Activated naive CD4-positive, alpha-beta T cell treated with anti-CD3 and anti-CD28 coated beads for 36 hours (primary cell): ENCODE measurements at regions of chr5 and their contacts with region 1.

Region 1: GRCh38 chr5:141691867-141692532 is 10.0 kb upstream of the ARAP3 start:
- DNase-seq: peak; percentile 90
- H3K4me3 Mint-ChIP-seq: peak overlapping the region; percentile 53
- H3K27ac Mint-ChIP-seq: no peak overlapping the region
- H3K4me1 Mint-ChIP-seq: peaks cover 20% of the 10 kb centered on the region
- H3K27me3 Mint-ChIP-seq: peaks cover 7% of the 10 kb centered on the region

Region 2: DNA sequence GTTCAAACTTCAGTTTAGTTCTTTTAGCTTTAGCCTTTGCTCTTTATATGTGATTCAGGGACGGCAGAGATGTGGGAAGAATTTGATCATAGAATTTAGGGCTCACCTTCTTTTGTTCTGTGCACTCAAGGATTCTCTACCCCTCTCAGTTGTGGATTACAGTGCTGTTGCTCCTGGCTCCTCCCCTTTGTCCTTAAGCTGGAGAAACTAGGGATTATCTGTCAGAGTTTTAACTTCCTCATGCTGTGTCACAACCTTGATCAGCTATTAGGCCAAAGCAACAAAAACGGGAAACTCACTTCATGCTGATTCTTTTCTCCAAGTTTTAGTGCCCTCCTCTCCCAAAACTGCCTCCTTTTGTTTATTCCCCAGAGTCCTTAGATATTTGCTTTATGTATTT is 738.8 kb before region 1 on chr5:
- CTCF ChIA-PET with region 1: no interaction called
- intact Hi-C with region 1: no loop called
- DNase-seq: no peak
- H3K4me3 Mint-ChIP-seq: no peak overlapping the region
- H3K27ac Mint-ChIP-seq: no peak overlapping the region
- H3K4me1 Mint-ChIP-seq: no peaks in the 10 kb centered on the region
- H3K27me3 Mint-ChIP-seq: peaks cover 3% of the 10 kb centered on the region

Region 3: DNA sequence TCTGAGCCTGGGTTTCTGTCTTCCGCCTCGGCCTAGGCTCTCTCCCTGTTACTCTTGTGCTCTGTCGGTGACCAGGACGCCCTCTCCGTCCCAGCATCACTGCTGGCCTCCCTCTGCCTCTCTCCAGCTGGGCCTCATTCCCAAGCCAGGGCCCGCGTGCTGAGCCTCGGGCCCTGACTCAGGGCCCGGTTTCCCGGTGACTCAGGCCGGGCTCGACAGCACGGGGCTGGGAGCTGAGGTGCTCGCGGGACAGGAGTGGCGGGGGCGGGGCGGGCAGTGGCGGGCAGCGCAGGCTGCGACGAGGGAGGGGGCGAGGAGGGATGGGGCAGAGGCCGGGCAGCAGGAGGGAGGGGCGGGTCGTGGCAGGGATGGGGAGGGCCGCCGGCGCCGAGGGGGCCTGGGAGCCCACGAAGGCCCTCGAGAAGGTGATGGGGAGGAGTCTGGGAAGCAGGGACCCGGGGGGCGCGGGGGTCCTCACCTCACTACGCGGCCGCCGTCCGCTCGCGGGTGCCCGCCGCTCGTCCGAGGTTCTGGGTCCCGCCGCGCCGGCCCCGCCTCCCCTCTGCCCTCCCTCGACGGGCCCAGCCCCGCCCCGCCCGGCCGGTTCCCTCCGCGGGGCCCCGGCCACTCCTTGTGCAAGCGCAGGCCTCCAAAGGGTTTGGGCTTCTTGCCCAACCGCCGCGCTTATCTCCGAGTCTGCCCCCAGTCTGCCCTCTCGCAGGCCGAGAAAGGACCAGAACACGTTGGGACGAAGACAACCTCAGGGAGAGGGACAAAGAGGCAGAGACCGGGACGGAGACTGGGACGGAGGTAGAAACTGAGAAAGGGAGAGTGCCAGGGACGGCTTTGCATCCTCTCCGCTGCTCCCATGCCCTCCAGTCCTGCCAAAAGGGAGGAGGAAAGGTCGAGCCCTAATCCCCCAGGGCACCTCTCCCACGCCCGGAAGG is 10.0 kb before region 1 on chr5 and contains the start of gene ARAP3:
- CTCF ChIA-PET with region 1: interaction called, 55 read pairs
- intact Hi-C with region 1: no loop called
- DNase-seq: peak; percentile 41
- H3K4me3 Mint-ChIP-seq: peak within 1 kb of the TSS; percentile 63
- H3K27ac Mint-ChIP-seq: peak within 1 kb of the TSS; percentile 25
- H3K4me1 Mint-ChIP-seq: peaks cover 18% of the 10 kb centered on the region
- H3K27me3 Mint-ChIP-seq: no peaks in the 10 kb centered on the region
- total RNA-seq, gene ARAP3: 1.2 to 2.2 TPM

Region 4: DNA sequence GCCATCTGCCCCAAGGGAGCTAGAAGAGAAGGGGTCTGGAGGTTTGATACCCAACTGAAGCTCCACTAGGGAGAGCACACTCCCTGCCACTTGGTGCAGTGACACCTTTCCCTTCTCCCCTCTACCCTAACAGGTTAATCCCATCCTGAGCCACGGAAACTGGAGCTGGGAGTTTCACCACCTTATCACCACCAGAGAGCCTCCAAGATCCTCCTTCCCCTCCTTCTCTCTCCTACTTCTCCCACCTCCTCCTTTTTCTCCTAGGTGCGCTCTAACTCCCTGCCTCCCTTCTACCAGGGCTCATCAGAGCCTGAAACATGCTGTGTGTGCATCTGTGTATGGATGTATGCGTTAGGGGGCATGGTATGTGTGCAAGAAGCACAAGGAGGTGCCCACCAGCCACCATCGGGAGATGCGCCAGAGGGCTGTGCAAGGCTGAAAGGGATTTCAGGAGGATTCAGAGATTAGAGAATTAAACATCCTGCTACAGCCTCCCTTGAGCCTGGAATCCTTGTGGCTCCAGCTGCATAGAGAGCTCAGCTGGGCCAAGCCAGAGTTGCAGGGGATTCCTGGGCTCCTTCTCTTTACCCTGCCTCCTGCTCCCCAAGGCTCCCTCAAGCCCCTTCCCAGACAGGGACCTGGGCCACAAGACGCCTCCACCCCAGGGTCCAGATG is 96.4 kb after region 1 on chr5:
- CTCF ChIA-PET with region 1: no interaction called
- intact Hi-C with region 1: no loop called
- DNase-seq: no peak
- H3K4me3 Mint-ChIP-seq: no peak overlapping the region
- H3K27ac Mint-ChIP-seq: no peak overlapping the region
- H3K4me1 Mint-ChIP-seq: no peaks in the 10 kb centered on the region
- H3K27me3 Mint-ChIP-seq: peaks cover 5% of the 10 kb centered on the region

Region 5: GRCh38 chr5:141825791-141826560 is 134.0 kb after region 1 on chr5:
- CTCF ChIA-PET with region 1: interaction called, 7 read pairs
- intact Hi-C with region 1: loop called (anchors 2 kb)
- DNase-seq: peak; percentile 23
- H3K4me3 Mint-ChIP-seq: no peak overlapping the region
- H3K27ac Mint-ChIP-seq: no peak overlapping the region
- H3K4me1 Mint-ChIP-seq: no peaks in the 10 kb centered on the region
- H3K27me3 Mint-ChIP-seq: no peaks in the 10 kb centered on the region

Region 6: DNA sequence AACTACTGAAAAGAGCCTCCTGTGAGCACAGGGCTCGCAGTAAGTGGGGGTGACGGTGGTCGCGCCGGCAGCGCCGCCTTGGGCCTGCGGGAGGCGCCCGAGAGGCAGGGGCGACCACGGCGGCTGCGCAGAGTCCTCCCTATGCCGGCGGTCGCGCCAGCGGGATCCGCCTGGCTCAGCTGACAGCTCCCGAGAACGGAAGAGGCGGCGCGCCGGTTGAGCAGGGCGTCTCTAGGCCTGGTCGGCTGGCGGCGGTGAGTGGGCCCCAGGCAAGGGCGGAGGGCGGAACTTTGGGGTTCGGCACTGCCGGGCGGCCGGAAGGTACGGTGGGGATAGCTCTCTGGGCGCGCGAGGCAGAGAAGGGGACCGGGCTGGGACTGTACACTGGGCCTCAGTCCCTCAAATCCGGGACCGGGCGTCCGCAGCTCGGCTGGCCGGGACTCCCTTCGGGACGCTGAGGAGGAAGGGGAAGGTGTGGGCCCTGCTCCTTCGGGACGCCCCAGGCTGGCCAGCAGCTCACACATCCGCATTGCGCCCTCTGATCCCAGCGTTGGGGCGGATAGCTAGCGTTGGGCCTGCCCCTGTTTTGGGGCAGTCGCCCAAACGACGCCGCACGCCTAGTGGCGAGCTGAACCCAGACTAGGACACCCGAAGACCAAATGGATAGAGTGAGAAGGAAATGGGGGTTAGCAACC is 277.1 kb after region 1 on chr5 and contains the start of gene RNF14:
- CTCF ChIA-PET with region 1: interaction called, 23 read pairs
- intact Hi-C with region 1: loop called (anchors 2 kb)
- DNase-seq: peak; percentile 96
- H3K4me3 Mint-ChIP-seq: peak within 1 kb of the TSS; percentile 93
- H3K27ac Mint-ChIP-seq: peak within 1 kb of the TSS; percentile 91
- H3K4me1 Mint-ChIP-seq: peaks cover 37% of the 10 kb centered on the region
- H3K27me3 Mint-ChIP-seq: no peaks in the 10 kb centered on the region
- total RNA-seq, gene RNF14: 29.8 to 35.6 TPM

Region 7: DNA sequence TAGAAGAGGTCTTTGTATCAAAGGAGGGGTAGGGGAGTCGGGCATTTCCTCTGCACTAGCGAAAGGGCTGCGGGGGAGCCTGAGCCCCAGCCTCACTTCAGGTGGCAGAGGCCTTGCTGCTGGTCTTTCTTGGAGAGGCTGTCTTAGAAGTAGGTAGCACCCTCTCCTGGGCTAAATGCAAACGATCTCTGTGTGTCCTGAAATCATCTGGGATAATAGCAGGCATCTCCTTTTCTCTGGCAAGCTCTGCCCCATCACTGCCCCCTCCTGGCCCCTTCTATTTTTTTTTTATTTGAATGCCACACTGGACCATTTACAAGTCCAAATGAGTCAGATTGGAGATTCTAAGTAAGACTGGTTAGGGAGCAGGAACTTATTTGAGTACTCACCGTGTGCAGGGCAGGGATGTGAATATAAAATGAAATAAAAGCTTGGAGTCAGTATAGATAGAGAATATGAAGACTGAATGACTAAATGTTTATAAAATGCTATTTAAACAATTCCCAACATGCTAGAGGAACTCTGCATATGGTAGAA is 856.8 kb after region 1 on chr5:
- CTCF ChIA-PET with region 1: no interaction called
- intact Hi-C with region 1: loop called (anchors 2 kb)
- DNase-seq: peak; percentile 57
- H3K4me3 Mint-ChIP-seq: no peak overlapping the region
- H3K27ac Mint-ChIP-seq: no peak overlapping the region
- H3K4me1 Mint-ChIP-seq: peaks cover 13% of the 10 kb centered on the region
- H3K27me3 Mint-ChIP-seq: peaks cover 19% of the 10 kb centered on the region